PC-9 (cell line): ENCODE measurements at regions of chr10 and their contacts with region 1.

Region 1: DNA sequence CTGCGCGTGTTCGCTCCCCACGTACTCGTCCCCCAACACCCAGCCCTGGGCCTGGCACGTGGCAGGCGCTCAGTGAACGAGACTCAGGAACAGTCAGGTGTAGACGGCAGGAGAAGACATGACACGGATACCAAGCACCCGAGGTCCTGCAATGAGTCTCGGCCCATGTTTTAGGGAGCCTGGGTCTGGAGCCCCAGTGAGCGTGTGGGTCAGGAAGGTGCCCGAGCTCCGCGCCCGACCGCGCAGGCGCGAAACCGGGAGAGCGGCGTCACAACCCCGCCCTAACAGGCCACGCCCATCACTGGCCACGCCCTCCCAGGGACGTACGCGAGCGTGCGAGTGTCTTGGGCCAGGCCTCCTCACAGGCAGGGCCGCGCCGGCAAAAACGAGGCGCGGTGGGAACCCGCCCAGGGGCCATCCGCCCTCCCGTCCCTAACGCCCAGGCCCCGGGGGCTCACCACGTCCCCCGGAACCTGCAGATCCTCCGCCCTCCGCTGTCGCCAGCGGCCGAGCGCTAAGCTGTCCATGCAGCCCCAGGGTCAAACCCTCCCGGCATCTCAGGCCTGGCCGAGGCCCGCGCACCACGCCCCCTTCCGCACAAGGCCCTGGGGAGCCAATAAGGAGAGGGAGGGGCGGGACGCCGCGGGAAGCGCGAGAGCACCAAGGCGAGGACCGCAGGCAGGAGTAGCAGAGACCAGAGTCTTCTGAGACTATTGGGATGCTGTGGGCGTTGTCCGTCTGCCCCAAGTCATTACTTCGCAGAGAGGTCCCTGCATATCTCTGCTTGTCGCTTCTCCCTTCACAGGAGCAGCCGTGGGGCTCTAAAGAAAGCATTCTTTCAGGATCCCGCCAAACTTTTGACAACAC is at the start of gene C10orf143:
- DNase-seq: peak; percentile 67 to 93
- H3K4me3 ChIP-seq: peak within 1 kb of the TSS; percentile 65
- H3K27ac ChIP-seq: peak within 1 kb of the TSS; percentile 53; the same call in 1 of the 2 replicates
- H3K4me1 ChIP-seq: no peaks in the 10 kb centered on the region
- H3K27me3 ChIP-seq: no peaks in the 10 kb centered on the region
- CTCF ChIP-seq: no peak
- total RNA-seq, gene C10orf143: 2.8 and 3.5 TPM in 2 replicates

Region 2: GRCh38 chr10:129982825-129983224 is 127.7 kb before region 1 on chr10:
- CTCF ChIA-PET with region 1: no interaction called
- POLR2A ChIA-PET with region 1: interaction called, 13 read pairs
- intact Hi-C with region 1: no loop called
- DNase-seq: no peak
- H3K4me3 ChIP-seq: no peak overlapping the region
- H3K27ac ChIP-seq: no peak overlapping the region
- H3K4me1 ChIP-seq: no peaks in the 10 kb centered on the region
- H3K27me3 ChIP-seq: peaks cover 1% of the 10 kb centered on the region; the same call in 1 of the 2 replicates
- CTCF ChIP-seq: no peak

Region 3: DNA sequence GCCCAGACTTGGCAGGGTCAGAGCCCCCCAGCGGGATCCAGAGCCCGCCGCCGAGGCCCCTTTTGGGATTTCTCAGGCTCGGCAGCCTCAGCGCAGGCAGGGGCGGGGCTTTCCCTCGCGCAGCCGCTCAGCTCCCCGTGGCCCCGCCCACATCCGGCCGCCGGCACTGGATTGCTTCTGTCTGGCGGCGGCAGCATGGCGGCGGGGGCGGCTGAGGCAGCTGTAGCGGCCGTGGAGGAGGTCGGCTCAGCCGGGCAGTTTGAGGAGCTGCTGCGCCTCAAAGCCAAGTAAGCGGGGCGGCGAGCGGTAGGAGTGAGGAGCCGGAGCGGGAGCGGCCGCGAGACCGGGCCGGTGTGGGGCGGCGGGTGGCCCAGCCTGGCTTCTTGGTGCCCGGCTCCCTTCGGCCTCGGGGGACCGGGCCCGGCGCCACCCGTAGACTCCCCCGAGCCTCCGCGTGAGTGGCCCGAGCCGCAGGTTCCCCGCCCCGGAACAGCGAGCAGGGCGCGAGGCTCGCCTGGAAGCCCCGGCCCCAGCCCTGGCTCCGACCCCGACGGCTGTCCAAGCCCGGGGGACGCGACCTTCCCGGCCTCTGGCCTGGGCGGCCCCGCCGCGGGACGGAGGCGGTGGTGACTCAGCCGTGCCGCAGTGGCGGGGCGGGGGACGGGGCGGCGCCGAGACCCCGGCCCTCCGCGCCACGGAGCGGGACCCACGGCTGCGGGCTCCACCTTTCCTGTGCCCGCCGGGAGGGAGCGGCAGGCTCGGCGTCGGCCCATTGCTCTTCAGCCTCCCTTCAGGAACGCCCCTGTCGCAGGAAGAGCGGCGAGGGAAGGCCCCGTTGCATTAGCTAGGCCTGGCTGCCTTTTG is 26.0 kb after region 1 on chr10 and contains the start of gene GLRX3:
- CTCF ChIA-PET with region 1: interaction called, 4 read pairs
- POLR2A ChIA-PET with region 1: interaction called, 5 read pairs
- intact Hi-C with region 1: loop called (anchors 1 kb)
- DNase-seq: peak; percentile 35 to 78
- H3K4me3 ChIP-seq: peak within 1 kb of the TSS; percentile 56; the same call in 1 of the 2 replicates
- H3K27ac ChIP-seq: no peak within 1 kb of the TSS
- H3K4me1 ChIP-seq: no peaks in the 10 kb centered on the region
- H3K27me3 ChIP-seq: no peaks in the 10 kb centered on the region
- CTCF ChIP-seq: no peak
- total RNA-seq, gene GLRX3: 69.0 and 78.0 TPM in 2 replicates